Left ventricle myocardium inferior (tissue), 1 donor: ENCODE measurements at regions of chr1 and their contacts with region 1.

Region 1: DNA sequence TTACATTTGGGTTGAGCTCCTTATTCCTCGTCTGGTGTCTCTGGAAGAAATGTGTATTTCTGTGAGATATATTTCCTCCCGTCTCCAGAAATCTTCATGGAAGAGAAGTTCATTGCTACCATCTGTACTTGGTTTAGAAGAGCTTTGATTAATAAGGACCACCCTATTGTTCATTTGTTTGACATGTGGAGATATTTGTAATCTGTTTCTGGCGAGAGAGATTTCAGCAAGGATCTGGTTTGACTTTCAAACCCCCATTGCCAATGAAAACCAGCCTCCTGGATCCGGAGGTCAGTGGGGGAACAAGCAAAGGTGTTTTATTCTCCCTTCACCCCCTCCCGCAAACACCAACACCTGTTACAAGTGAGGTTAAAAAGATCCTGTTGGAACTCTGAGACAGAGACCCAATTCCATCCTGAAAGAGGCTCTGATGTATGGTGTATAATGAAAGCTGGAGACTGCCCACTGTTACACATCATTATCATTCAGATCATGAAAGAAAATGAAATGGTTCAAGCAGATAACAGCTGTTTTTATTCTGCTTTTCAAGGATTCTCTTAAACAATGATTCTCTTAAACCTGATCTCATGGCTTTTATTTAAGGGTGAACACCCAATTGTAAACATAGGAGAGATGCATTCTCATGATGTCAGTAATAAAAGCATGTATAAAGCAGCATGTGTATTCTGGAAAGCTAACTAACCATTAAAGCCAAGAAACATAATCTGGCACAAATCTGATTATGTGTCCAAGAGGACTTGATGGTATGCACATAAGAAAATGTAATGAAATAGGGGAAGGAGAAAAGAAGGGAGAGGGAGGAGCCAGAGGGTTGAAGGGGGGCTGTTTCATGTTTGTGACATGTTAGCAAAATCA is 393.5 kb upstream of the ADGRL2 start:
- DNase-seq: no peak
- H3K4me3 ChIP-seq: no peak overlapping the region
- H3K27ac ChIP-seq: peak overlapping the region; percentile 1
- H3K4me1 ChIP-seq: peaks cover 47% of the 10 kb centered on the region
- H3K27me3 ChIP-seq: no peaks in the 10 kb centered on the region
- CTCF ChIP-seq: no peak

Region 2: DNA sequence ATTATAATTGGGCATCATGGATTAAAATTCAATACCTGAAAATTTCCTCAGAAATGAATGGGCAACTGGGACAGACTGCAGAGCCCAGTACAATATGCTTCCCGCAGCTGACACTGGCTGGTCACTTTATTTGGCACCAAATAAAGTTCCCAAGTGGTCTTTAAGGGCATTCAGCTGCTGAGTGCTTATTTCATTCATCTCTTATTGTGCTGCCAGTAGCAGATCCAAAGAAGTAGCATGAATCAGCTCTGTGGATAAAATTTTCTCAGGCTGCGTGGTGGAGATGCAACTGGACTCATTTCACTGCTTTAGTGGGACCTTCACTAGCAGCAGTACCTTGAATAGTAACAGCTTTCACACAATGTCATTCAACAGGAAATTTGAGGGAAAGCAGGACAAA is 167.2 kb after region 1 on chr1:
- intact Hi-C with region 1: no loop called
- DNase-seq: no peak
- H3K4me3 ChIP-seq: peak overlapping the region; percentile 19
- H3K27ac ChIP-seq: no peak overlapping the region
- H3K4me1 ChIP-seq: peaks cover 34% of the 10 kb centered on the region
- H3K27me3 ChIP-seq: no peaks in the 10 kb centered on the region
- CTCF ChIP-seq: no peak

Region 3: DNA sequence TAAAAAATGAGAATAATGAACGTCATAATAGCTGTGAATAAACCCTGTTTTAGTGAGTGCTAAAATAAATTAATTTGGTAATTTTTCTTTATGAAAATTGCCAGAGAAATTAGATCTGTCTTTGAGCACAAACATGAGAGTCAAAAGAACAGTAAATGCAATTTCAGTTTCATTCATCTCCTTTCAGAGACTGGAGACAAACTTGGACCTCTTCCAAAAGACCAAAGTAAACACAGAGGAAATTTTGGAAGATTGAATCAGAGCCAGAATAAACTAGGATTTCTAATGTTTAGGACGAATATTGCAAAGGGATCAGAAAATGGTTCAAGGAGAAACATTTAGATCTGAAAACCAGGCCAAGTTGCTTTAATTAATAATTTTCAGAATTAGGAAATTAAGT is 703.6 kb after region 1 on chr1:
- intact Hi-C with region 1: loop called (anchors 10 kb)
- DNase-seq: no peak
- H3K4me3 ChIP-seq: no peak overlapping the region
- H3K27ac ChIP-seq: peak overlapping the region; percentile 9
- H3K4me1 ChIP-seq: peaks cover 9% of the 10 kb centered on the region
- H3K27me3 ChIP-seq: no peaks in the 10 kb centered on the region
- CTCF ChIP-seq: no peak